ENCODE measurements at regions of chr13 and their contacts with region 1.

Region 1: GRCh38 chr13:30422054-30422839 is at the start of gene UBE2L5:
- DNase-seq: peak; percentile 60 to 84 (median 72)
- H3K4me3 ChIP-seq: peak within 1 kb of the TSS; percentile 48 to 86 (median 70)
- H3K27ac ChIP-seq: peak within 1 kb of the TSS; percentile 52 to 97 (median 92)
- H3K27me3 ChIP-seq: no peaks in the 10 kb centered on the region
- CTCF ChIP-seq: peak in 8 of 56 donors; percentile 6 to 32 (median 10)
- total RNA-seq, gene UBE2L5: 0.22 to 2.8 (median 0.73) TPM in 102 of 120 experiments, not detected in the others

Region 2: GRCh38 chr13:30276178-30276577 is 146.1 kb before region 1 on chr13:
- intact Hi-C with region 1: no loop called
- DNase-seq: no peak
- H3K4me3 ChIP-seq: no peak overlapping the region
- H3K27ac ChIP-seq: no peak overlapping the region
- H3K27me3 ChIP-seq: no peaks in the 10 kb centered on the region
- CTCF ChIP-seq: no peak

Region 3: DNA sequence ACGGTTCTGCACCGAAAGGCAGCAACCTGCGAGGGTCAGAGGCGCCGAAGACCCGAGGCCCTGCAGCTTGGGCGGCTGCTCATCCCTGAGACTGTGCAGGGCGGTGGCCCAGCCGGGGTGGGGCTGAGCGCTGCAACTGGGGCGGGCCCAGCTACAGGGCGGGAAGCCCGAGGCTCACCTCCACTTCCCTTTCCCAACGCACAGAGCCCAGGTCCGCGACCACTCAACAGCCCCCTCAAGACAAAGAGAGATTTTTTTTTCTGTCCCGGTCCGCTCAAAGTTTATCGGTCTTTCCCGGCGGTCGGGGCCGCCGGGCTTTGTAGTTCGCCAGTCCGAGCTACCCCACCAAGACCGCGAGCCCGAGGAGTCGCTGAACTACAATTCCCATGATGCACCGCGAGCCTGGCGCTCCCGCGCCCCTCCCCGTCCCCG is 115.5 kb before region 1 on chr13:
- intact Hi-C with region 1: loop called in 1 of 2 experiments (anchors 10 kb)
- DNase-seq: peak; percentile 88 to 97 (median 93)
- H3K4me3 ChIP-seq: peak overlapping the region; percentile 74 to 99 (median 92)
- H3K27ac ChIP-seq: peak overlapping the region; percentile 41 to 97 (median 93)
- H3K27me3 ChIP-seq: no peaks in the 10 kb centered on the region
- CTCF ChIP-seq: peak in 17 of 56 donors; percentile 3 to 40 (median 15)

Region 4: GRCh38 chr13:30629527-30629926 is 207.3 kb after region 1 on chr13:
- intact Hi-C with region 1: no loop called
- DNase-seq: no peak
- H3K4me3 ChIP-seq: no peak overlapping the region
- H3K27ac ChIP-seq: no peak overlapping the region
- H3K27me3 ChIP-seq: no peaks in the 10 kb centered on the region
- CTCF ChIP-seq: no peak

Region 5: GRCh38 chr13:30679483-30680330 is 257.5 kb after region 1 on chr13:
- intact Hi-C with region 1: loop called in 1 of 2 experiments (anchors 5 kb)
- DNase-seq: peak in 3 of 10 donors; percentile 39 to 49 (median 40)
- H3K4me3 ChIP-seq: peak overlapping the region in 2 of 59 donors; percentile 15 to 24
- H3K27ac ChIP-seq: peak overlapping the region in 20 of 59 donors; percentile 0 to 66 (median 29)
- H3K27me3 ChIP-seq: no peaks in the 10 kb centered on the region
- CTCF ChIP-seq: peak in 55 of 56 donors; percentile 33 to 77 (median 59)

Measured in dorsolateral prefrontal cortex (tissue), 120 donors.